Right ventricle myocardium superior (tissue), 1 donor: ENCODE measurements at regions of chr12 and their contacts with region 1.

Region 1: GRCh38 chr12:21509768-21510167 is 8.2 kb downstream of the GOLT1B start:
- DNase-seq: no peak
- ATAC-seq: no peak

Region 2: GRCh38 chr12:21308785-21309184 is 201.0 kb before region 1 on chr12:
- intact Hi-C with region 1: no loop called
- DNase-seq: no peak
- ATAC-seq: no peak

Region 3: GRCh38 chr12:21677622-21678277 is 168.0 kb after region 1 on chr12:
- intact Hi-C with region 1: loop called (anchors 10 kb)
- DNase-seq: no peak
- ATAC-seq: no peak